ENCODE measurements at regions of chr9 and their contacts with region 1.

Region 1: DNA sequence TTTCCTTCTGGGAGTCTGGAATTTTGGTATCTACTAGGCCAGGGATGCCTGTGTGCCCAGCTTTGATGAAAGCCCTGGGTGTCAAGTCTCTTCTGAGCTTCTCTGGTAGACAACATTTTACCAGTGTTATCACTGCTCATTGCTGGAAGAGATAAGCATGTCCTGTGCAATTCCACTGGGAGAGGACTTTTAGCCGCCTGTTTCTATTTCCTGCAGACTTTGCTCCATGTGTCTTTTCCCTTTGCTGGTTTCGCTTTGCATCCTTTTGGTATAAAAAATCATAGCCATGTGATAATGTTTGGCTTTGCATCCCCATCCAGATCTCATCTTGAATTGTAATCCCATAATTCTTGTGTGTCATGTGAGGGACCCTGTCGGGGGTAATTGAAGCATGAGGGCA is 163.2 kb downstream of the SLC28A3 start:
- DNase-seq: no peak
- ATAC-seq: no peak
- H3K4me3 ChIP-seq: no peak overlapping the region
- H3K27ac ChIP-seq: no peak overlapping the region
- H3K4me1 ChIP-seq: peaks cover 0 to 20% (median 9%) of the 10 kb centered on the region in 12 donors
- H3K27me3 ChIP-seq: no peaks in the 10 kb centered on the region
- CTCF ChIP-seq: no peak
- POLR2A ChIP-seq: no peak

Region 2: GRCh38 chr9:84254972-84255371 is 77.6 kb after region 1 on chr9:
- intact Hi-C with region 1: loop called in 5 of 10 experiments (anchors 5 to 10 kb)
- DNase-seq: peak in 1 of 5 donors; percentile 46
- ATAC-seq: peak in 2 of 4 donors; percentile 49 to 75
- H3K4me3 ChIP-seq: no peak overlapping the region
- H3K27ac ChIP-seq: no peak overlapping the region
- H3K4me1 ChIP-seq: peaks cover 0 to 3% (median 0%) of the 10 kb centered on the region in 12 donors
- H3K27me3 ChIP-seq: no peaks in the 10 kb centered on the region
- CTCF ChIP-seq: no peak
- POLR2A ChIP-seq: no peak

Measured in heart left ventricle (tissue), 16 donors.